Breast epithelium (tissue), 4 donors: ENCODE measurements at regions of chr6 and their contacts with region 1.

Region 1: DNA sequence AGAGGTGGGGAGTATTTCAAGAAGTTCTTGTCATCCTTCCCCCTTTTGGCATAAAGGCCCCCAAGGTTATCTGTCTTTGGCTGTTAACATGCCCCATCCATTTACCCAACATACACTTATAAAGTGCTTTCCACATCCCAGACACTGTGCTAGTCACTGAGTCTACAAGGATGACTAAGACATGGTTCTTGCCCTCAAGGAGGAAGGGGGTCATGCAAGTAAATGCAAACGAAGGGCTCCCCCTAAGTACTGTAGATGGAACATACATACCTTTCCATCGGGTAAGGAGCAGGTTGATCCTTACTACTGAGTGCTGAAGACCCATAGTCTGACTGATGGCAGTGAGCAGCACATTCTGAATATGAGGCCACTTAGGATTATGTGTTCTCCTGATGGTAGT is 38.3 kb downstream of the HECA start:
- DNase-seq: no peak
- H3K4me3 ChIP-seq: no peak overlapping the region
- H3K27ac ChIP-seq: no peak overlapping the region
- H3K4me1 ChIP-seq: no peaks in the 10 kb centered on the region
- H3K27me3 ChIP-seq: no peaks in the 10 kb centered on the region
- CTCF ChIP-seq: no peak
- POLR2A ChIP-seq: no peak

Region 2: GRCh38 chr6:138278326-138278725 is 894.8 kb before region 1 on chr6:
- intact Hi-C with region 1: loop called (anchors 5 kb)
- DNase-seq: no peak
- H3K4me3 ChIP-seq: no peak overlapping the region
- H3K27ac ChIP-seq: no peak overlapping the region
- H3K4me1 ChIP-seq: no peaks in the 10 kb centered on the region
- H3K27me3 ChIP-seq: no peaks in the 10 kb centered on the region
- CTCF ChIP-seq: peak in 1 of 3 donors; percentile 19
- POLR2A ChIP-seq: no peak